Dendritic cell treated with granulocyte-macrophage colony-stimulating factor and Interleukin-4, amounts not matched to agents 40 ng/mL and 50 ng/mL, for 4 days (primary cell): ENCODE measurements at regions of chr7 and their contacts with region 1.

Region 1: DNA sequence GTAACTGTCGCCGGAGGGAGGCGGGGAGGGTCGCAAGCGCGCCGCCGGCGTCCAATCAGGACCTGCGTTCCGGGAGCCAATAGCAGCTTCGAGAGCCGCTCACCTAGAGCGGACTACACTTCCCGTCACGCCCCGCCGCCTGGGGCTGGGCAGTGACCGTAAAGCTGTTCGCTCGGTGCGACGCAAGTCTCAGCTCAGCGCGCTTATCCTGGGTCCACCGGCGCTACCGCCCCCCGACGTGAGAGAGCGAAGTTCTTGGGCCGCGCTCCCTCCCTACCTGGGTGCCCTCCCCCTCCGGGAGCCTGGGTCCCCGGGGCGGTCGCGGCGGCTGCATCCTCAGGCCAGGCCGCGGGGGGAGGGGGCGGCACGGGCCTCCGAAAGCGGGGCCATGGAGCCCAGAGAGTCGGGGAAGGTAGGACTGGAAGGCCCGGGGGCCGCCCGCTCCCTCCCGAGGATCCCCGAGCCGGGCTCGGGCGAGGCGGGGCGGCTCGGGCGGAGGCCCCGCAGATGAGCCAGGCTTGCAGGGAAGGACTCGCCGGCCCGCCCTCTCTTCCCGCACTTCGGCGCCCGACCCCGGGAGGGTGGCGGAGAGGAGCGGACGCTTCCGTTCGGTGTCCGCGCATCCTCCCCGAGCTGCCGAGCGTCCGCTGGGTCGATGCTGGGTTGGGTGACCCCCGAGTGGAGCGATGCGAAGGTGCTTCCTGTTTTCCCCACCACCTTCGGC is at the start of gene ZNF862:
- H3K4me3 Mint-ChIP-seq: peak within 1 kb of the TSS; percentile 80
- H3K27ac Mint-ChIP-seq: peak within 1 kb of the TSS; percentile 72
- H3K4me1 Mint-ChIP-seq: peaks cover 22% of the 10 kb centered on the region
- H3K27me3 Mint-ChIP-seq: peaks cover 11% of the 10 kb centered on the region

Region 2: DNA sequence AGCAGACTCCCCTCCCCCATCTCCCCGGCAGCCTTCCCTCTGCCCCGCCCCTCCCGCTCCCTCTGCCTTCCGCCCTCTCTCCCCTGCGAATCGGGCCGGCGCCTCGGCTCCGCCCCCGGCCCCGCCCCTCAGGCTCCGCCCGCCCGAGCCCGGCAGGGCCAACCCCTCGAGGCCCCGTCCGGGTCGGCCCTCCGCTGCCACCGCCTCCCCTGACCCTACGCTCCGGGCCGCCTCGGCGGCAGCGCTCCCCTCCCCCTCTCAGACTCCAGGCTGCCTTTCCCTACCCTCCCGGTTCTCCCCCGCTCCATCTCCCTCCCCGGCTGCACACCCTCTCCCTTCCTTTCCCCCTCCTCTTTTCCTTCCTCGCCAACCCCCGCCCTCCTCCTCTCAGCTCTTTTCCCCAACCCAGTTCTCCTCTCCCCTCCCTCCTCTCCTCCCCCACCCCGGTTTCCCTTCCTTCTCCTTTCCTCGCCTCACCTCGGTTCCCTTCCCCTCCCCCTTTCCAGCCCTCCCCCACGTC is 66.6 kb before region 1 on chr7:
- intact Hi-C with region 1: loop called (anchors 5 kb)
- H3K4me3 Mint-ChIP-seq: peak overlapping the region; percentile 90
- H3K27ac Mint-ChIP-seq: peak overlapping the region; percentile 87
- H3K4me1 Mint-ChIP-seq: peaks cover 41% of the 10 kb centered on the region
- H3K27me3 Mint-ChIP-seq: peaks cover 1% of the 10 kb centered on the region

Region 3: GRCh38 chr7:149872419-149873073 is 34.2 kb after region 1 on chr7:
- intact Hi-C with region 1: loop called (anchors 1 kb)
- H3K4me3 Mint-ChIP-seq: peak overlapping the region; percentile 80
- H3K27ac Mint-ChIP-seq: peak overlapping the region; percentile 76
- H3K4me1 Mint-ChIP-seq: peaks cover 31% of the 10 kb centered on the region
- H3K27me3 Mint-ChIP-seq: peaks cover 8% of the 10 kb centered on the region